H1 (cell line): ENCODE measurements at regions of chr19 and their contacts with region 1.

Region 1: DNA sequence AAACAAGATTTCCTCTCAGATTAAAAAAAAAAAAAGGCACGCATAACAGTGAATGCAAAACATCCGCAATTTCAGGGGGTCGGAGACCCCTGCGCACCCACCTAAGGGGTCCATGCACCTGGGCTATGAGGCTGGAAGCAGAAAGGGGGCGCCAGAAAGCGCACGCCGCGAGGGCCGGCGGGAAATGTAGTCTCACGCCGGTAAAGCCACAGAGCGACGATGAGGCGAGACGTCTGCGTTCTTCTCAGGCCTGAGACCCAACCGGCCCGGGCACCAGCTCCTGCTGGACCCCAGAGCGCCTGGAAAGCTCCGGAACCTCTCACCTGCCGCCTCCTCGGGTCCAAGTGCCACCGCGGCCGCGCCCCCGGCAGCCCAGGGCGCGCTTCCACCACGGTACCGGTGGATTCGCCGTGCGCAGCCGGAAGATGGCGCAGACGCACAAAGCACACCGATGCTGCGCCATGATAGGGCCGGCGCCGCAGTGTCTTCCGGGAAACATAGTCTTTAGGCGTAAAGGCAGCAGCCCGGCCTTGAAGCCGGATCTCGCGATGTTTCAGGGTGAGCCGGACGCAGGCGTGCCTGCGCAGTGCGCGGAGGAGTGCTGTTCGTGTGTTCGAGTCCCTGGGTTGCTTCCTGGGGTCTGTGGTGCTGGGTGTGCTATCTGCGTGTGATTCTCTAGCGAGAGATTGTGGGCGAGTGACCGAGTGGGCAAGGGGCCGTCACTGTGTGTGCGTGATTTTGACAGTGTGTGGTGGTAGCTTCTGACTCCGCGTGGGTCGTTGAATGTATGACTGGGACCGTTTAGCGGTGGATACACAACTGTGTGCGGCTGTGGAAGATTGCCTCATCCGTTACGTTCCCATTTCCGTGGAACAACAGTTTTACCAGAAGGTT is at the start of gene ZNF582:
- DNase-seq: peak; percentile 82 to 90
- H3K4me3 ChIP-seq: peak within 1 kb of the TSS; percentile 67 to 87 (median 76)
- H3K27ac ChIP-seq: peak within 1 kb of the TSS; percentile 98
- H3K4me1 ChIP-seq: no peaks in the 10 kb centered on the region
- H3K27me3 ChIP-seq: no peaks in the 10 kb centered on the region
- CTCF ChIP-seq: peak; percentile 74 to 90 (median 81)
- EP300 ChIP-seq: no peak
- POLR2A ChIP-seq: peak; percentile 84 to 98
- RAD21 ChIP-seq: peak in 1 of 2 experiments; percentile 49; a peak in 3 of 4 replicates
- total RNA-seq, gene ZNF582: 3.8 and 5.8 TPM in 2 replicates

Region 2: GRCh38 chr19:56403764-56404704 is 10.7 kb after region 1 on chr19 and contains the start of gene ZNF583:
- CTCF ChIA-PET with region 1: interaction called, 11 read pairs
- POLR2A ChIA-PET with region 1: interaction called, 11 read pairs
- DNase-seq: peak; percentile 57 to 93
- H3K4me3 ChIP-seq: peak within 1 kb of the TSS; percentile 83 to 95 (median 92)
- H3K27ac ChIP-seq: peak within 1 kb of the TSS; percentile 87
- H3K4me1 ChIP-seq: peaks cover 0 to 6% (median 4%) of the 10 kb centered on the region in 4 experiments; a peak in 4 of 7 replicates
- H3K27me3 ChIP-seq: no peaks in the 10 kb centered on the region
- CTCF ChIP-seq: no peak
- EP300 ChIP-seq: no peak
- POLR2A ChIP-seq: peak in 1 of 2 experiments; percentile 86; a peak in 2 of 3 replicates
- RAD21 ChIP-seq: peak in 1 of 2 experiments; percentile 3; a peak in 1 of 4 replicates
- total RNA-seq, gene ZNF583: 2.6 and 2.8 TPM in 2 replicates